Right ventricle myocardium superior (tissue), 1 donor: ENCODE measurements at regions of chr6 and their contacts with region 1.

Region 1: GRCh38 chr6:150142670-150143515 is at the start of gene PPP1R14C:
- DNase-seq: peak; percentile 58
- ATAC-seq: peak; percentile 82
- total RNA-seq, gene PPP1R14C: 131 TPM

Region 2: DNA sequence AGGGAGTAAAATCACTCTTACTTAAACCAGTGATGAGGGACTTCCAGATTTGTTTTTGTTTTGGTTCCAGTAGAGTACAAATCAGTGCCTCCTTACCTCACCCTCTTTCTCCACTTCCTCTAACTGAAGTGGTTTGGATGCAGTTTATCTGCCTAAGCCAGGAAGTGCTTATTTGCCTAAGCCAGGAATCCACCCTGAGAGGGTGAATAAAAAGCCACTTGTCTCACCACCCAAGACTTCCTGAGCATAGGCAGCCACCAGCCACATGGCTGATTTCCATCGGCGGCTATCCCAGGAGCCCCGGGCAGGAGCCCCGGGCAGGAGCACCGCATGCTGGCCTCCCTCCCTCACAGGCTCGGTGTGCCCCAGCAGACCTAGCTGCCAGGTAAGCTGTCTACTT is 290.7 kb before region 1 on chr6:
- intact Hi-C with region 1: no loop called
- DNase-seq: no peak
- ATAC-seq: peak; percentile 40

Region 3: DNA sequence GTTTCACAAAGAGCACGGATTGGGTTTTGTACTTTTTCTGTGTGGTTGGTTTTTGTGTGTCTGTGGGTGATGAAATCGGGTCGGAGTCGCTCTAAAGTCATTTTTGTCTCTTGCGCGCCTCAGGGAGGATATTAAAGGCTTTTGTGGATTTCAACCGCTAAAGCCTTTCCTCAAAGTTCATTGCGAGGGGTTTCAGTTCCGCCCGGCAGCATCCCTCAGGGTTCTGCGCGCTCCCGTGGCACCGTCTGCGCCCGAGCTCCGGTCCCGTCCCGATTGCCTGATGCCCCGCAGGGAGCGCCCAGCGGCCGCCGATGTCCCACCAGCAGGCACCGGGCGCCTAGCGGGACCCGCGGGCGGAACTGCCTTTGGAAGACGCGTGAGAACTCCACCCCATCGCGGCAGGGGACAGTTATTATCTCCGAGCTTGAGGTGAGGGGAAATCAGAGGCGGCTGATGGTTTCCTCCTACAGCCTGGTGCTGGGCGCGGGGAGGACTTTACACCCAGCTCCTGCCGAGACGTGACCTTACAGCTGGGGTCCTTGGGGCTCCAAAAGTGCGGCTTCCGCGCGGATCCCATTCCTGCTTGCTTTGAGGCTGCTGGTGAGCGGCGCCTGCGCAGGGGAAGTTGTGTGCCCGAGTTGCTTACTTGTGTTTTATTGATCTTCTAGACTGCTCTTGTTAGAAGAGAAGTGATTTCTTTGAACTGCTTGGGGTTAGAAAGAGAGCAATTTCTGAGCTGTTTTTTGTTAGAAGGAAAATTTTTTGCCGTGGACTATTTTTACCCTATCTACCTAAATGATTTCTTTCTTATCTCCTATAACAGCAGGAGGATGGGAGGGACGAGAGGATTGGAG is 152.0 kb before region 1 on chr6:
- intact Hi-C with region 1: no loop called
- DNase-seq: no peak
- ATAC-seq: no peak

Region 4: GRCh38 chr6:150072201-150072600 is 70.7 kb before region 1 on chr6:
- intact Hi-C with region 1: no loop called
- DNase-seq: peak; percentile 59
- ATAC-seq: no peak

Region 5: DNA sequence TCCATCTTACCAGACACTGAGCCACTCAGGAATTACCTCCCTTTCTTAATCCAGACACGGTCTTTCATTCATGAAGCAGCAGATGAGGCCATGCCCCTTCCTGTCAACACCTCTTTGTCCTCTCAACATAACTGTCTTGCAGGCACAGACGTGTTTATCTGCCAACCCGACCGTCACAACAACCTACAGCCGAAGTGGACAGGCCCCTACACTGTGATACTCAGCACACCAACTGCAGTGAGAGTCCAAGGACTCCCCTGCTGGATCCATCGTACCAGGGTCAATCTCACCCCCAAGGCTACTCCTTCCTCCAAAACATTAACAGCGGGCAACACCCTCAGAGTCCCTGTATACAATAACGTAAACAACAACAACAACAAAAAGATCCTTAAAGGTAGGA is 43.3 kb before region 1 on chr6:
- intact Hi-C with region 1: no loop called
- DNase-seq: no peak
- ATAC-seq: no peak

Region 6: DNA sequence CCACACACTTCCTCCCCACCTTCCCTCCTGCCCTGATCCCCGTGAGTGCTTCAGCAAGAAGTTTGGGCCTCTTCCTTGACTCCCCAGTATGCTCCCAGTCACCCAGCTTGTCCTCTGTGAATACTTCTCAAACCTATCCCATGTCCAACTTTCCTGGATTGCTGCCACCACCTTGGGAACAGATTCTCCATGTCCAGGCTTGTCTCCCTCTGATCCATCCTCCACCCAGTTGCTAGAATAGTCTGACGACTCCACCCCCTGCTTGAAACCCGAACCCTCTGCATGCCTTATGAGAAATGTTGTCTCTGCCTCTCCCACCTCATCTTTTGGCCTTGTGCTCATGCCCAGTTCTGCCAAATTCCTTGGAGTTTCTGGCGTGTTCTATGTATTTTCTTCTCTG is 107.9 kb after region 1 on chr6:
- intact Hi-C with region 1: loop called (anchors 10 kb)
- DNase-seq: no peak
- ATAC-seq: no peak

Region 7: GRCh38 chr6:150320442-150320841 is 177.5 kb after region 1 on chr6:
- intact Hi-C with region 1: loop called (anchors 5 kb)
- DNase-seq: peak; percentile 83
- ATAC-seq: peak; percentile 98